Psoas muscle (tissue), 8 donors: ENCODE measurements at regions of chr7 and their contacts with region 1.

Region 1: DNA sequence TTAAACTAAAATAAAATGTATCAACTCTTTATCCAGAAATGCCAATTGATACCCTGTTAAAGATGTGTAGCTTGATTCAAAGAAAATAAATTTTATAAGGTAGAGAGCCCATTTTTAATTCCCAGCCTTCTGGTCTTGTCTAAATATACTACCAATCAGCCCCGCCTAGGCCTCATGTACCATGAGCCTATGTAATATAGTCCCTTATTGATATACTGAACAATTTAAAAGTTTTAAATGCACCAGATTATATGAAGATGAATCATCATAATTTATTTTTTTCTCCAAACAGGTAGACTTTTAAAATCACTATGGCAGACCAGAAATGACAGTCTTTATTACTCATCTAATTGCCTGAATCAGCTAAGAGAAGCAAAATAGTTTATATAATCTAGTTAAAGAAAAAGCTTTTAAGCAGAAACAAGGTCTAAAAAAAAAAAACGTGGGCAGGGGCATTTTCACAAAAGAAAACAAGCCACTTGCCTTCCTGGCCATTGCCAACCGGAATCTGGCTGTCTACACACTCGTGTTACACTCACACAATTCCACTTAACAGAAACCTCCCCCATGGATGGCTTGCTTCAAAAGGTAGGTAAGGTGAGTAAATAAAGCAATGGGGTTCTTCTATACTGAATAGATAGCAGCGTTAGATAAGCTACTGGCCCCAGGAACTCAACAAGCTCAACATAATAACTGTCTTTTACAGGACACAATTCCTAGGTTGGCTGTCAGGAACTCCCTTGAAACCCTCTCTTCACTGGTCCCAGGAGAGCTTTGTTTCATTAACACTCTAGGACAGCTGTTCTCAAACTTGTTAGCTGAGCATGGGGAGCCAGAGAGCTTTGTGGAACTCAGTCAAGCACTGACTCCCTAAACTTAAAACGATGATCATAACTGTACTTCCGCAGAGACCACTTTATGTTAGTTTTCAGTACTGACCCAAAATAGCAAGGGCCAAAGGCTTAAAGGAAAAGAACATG is 37.2 kb downstream of the RAPGEF5 start:
- DNase-seq: no peak
- ATAC-seq: peak in 1 of 4 donors; percentile 37
- H3K4me3 ChIP-seq: no peak overlapping the region
- H3K27ac ChIP-seq: no peak overlapping the region
- H3K4me1 ChIP-seq: no peaks in the 10 kb centered on the region
- H3K27me3 ChIP-seq: no peaks in the 10 kb centered on the region
- CTCF ChIP-seq: no peak

Region 2: DNA sequence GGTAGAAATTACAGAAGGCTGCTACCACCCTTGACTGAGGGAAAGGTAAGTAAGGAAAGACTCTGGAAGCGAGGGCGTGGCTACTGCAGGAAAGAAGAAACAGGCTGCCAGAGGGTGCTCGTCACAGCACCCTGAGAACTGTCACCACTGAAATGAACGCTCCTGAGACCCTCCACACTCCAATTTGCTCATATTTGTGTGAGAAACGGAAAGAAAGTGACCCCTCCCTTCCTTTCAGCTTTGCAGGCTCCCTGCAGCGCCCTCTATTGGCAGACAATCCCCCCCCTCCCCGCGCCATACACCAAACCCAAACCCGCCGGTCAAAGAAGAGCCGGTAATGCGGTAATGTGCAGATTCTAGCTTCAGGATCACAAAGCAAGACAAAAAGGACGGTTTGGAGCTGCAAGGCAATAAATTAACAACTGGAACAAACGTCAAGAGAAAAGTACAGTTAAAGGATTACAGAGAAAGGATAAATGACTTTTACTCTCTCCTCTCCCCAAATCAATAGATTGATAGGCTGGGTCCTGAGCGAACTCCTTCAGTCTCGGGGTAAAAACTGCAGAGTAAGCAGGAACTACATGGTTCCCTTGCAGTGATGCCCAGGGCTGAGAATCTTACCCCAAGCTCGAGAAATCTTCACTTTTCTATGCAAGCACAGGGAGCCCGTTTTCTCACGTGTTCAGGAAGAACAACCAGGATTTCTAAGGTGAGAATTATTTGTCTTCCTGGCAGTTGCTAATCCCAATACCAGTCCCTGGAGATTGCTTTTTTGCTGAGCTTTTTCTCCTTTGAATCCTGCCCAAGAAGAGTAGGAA is 132.6 kb after region 1 on chr7:
- intact Hi-C with region 1: loop called in 1 of 2 experiments (anchors 5 kb)
- DNase-seq: peak; percentile 35 to 66
- ATAC-seq: peak; percentile 57 to 86 (median 69)
- H3K4me3 ChIP-seq: peak overlapping the region; percentile 50
- H3K27ac ChIP-seq: no peak overlapping the region
- H3K4me1 ChIP-seq: peaks cover 6% of the 10 kb centered on the region
- H3K27me3 ChIP-seq: no peaks in the 10 kb centered on the region
- CTCF ChIP-seq: peak; percentile 61

Region 3: GRCh38 chr7:23247603-23248335 is 928.1 kb after region 1 on chr7:
- intact Hi-C with region 1: no loop called
- DNase-seq: peak; percentile 52 to 65
- ATAC-seq: peak in 3 of 4 donors; percentile 34 to 70 (median 59)
- H3K4me3 ChIP-seq: peak overlapping the region; percentile 61
- H3K27ac ChIP-seq: peak overlapping the region; percentile 55
- H3K4me1 ChIP-seq: peaks cover 7% of the 10 kb centered on the region
- H3K27me3 ChIP-seq: peaks cover 0 to 16% (median 6%) of the 10 kb centered on the region in 3 donors
- CTCF ChIP-seq: no peak